ENCODE measurements at regions of chr6 and their contacts with region 1.

Region 1: DNA sequence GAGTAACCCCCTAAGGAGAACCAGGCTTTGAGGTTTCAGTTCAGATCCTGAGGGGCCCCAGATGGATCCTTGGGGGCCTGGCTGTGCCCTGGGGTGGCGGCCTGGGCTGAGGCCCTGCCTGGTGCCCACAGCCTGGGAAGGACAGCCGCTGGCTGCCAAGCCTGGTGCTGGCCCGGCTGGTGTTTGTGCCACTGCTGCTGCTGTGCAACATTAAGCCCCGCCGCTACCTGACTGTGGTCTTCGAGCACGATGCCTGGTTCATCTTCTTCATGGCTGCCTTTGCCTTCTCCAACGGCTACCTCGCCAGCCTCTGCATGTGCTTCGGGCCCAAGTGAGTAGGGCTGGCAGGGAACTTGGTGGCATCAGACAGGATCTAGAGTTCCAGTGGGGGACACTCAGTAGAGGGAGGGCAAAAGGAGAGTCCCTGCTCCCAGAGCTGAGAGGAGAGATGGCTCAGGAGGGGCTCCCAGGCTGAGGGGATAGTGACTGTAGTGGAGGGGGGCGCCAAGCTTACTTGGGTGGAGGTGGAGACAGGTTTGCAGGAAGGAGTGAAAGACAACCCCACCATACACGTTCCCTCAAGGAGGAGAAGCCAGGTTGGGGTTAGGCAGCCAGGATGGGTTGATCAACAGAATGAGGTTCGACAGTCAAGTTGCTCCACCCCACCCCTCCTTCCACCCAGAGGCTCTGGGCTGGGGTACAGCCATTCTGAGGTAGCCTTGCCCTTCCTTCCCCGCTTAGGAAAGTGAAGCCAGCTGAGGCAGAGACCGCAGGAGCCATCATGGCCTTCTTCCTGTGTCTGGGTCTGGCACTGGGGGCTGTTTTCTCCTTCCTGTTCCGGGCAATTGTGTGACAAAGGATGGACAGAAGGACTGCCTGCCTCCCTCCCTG is 9.5 kb downstream of the SLC29A1 start:
- DNase-seq: no peak
- H3K4me3 ChIP-seq: no peak overlapping the region
- H3K27ac ChIP-seq: no peak overlapping the region
- H3K4me1 ChIP-seq: no peaks in the 10 kb centered on the region
- H3K27me3 ChIP-seq: no peaks in the 10 kb centered on the region
- CTCF ChIP-seq: no peak

Region 2: DNA sequence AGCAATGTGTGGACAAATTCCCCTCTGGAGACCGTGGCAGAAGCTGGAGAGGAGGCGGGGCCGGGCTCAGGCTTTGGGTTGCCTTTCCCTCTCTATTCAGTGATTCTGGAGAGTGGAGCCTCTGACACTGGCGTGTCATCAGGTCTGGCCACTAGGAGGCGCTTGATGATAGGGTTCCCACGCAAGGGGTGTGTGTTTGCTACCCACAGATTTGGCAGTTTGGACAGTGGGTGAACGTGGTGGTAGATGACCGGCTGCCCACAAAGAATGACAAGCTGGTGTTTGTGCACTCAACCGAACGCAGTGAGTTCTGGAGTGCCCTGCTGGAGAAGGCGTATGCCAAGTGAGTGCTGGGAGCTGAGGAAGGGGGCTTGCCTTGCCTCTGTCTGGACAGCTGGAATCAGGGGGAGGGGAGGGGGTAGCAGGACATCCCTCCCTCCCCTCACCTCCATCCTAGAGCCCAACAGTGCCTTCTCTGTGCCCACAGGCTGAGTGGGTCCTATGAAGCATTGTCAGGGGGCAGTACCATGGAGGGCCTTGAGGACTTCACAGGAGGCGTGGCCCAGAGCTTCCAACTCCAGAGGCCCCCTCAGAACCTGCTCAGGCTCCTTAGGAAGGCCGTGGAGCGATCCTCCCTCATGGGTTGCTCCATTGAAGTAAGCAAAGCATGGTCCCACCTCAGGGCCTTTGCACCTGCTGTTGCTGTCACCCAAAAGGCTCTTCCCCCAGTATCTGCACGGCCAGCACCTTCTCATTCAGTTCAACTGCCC is 60.0 kb before region 1 on chr6:
- intact Hi-C with region 1: loop called (anchors 2 kb)
- DNase-seq: peak; percentile 88
- H3K4me3 ChIP-seq: no peak overlapping the region
- H3K27ac ChIP-seq: no peak overlapping the region
- H3K4me1 ChIP-seq: no peaks in the 10 kb centered on the region
- H3K27me3 ChIP-seq: no peaks in the 10 kb centered on the region
- CTCF ChIP-seq: peak; percentile 92